ENCODE measurements at regions of chr7 and their contacts with region 1.

Region 1: GRCh38 chr7:100126931-100127865 is at the start of gene MBLAC1:
- DNase-seq: peak; percentile 78 to 94 (median 90)
- H3K4me3 ChIP-seq: peak within 1 kb of the TSS; percentile 64 to 98 (median 93)
- H3K27ac ChIP-seq: peak within 1 kb of the TSS; percentile 55 to 99 (median 95)
- H3K27me3 ChIP-seq: no peaks in the 10 kb centered on the region
- CTCF ChIP-seq: peak in 9 of 56 donors; percentile 1 to 27 (median 9)
- total RNA-seq, gene MBLAC1: 5.6 to 16.5 (median 11.0) TPM

Region 2: DNA sequence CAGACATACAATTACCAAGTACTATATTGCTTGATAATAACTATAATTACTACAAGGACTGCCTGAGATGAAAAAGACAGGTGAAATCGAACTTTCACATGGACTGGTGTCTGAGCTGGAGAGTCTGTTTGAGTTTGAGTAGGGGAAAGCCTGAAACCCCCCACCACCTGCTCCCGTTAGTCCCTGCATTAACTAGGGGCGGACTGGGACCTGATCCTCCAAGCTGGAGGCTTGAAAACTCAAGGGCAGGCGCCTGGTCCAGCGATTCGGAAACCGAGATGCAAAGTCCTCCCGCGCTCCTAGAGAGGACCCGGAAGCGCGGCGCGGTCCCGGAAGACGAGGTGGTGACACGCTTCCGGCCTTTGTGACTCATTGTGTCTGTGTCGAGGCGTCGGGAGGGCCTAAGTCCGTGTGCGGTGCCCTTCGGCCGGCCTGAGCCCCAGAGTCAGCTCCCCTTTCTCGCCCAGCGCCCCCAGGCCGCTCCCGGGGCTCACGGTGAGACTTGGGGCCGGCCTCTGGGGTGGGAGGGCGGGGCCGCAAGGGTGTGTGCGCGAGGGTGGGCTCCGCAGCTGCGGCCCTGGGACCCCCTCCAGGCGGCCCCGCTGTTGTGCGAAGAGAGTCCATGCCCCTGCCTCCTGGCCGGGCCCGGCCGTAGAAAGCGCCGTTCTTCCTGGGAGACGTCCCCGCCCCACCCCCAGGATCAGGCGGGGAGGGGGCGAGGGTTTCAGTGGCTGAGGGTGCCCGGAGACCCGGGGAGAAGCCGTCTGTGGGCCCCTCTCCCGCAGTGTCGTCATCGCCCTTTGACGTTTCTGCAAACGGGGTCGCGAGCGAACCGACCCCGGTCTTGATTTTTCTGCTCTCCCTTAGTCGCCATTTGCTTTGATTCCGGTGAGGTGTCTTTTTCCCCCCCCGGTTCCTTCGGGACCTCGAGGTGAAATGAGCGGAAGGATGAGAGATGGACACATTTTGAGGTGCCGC is 111.7 kb before region 1 on chr7 and contains the start of gene ZKSCAN1:
- intact Hi-C with region 1: no loop called
- DNase-seq: peak; percentile 84 to 93 (median 90)
- H3K4me3 ChIP-seq: peak within 1 kb of the TSS; percentile 65 to 100 (median 99)
- H3K27ac ChIP-seq: peak within 1 kb of the TSS; percentile 92 to 100 (median 99)
- H3K27me3 ChIP-seq: no peaks in the 10 kb centered on the region
- CTCF ChIP-seq: peak in 13 of 56 donors; percentile 7 to 40 (median 22)
- total RNA-seq, gene ZKSCAN1: 96.1 to 181 (median 132) TPM

Region 3: GRCh38 chr7:100148559-100149350 is 21.6 kb after region 1 on chr7 and contains the start of gene LAMTOR4:
- intact Hi-C with region 1: loop called in 1 of 2 experiments (anchors 2 kb)
- DNase-seq: peak; percentile 99 to 100 (median 100)
- H3K4me3 ChIP-seq: peak within 1 kb of the TSS; percentile 60 to 99 (median 85)
- H3K27ac ChIP-seq: peak within 1 kb of the TSS; percentile 62 to 98 (median 89)
- H3K27me3 ChIP-seq: no peaks in the 10 kb centered on the region
- CTCF ChIP-seq: peak in 28 of 56 donors; percentile 1 to 48 (median 21)
- total RNA-seq, gene LAMTOR4: 88.6 to 150 (median 113) TPM

Region 4: DNA sequence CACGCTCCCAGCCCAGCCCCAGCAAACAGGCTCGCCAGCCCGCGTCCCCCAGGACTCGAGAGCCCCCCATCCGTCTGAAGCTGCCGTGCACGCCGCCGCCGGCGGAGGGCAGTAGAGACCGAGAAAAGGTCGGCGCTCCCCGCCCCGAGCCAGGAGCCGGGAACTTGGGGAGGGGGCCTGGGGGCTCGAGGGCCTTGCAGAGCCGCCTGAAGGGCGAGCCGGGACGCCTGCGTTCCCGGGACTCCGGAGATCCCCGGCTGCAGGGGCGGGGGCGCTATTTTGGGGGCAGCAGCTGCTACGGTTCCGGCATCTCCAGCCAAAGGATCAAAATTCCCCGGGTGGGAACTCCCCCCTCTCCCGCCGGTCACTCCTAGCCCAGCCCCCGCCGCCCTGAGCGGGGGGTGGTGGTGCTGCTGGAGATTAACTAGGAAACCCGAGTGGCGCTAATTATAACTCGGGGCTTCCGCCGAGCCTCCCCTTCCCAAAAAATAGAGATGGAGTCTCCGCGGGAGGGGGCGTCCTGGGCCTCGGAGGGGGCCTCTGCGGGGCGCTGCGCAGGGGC is 767.7 kb after region 1 on chr7:
- intact Hi-C with region 1: no loop called
- DNase-seq: peak in 3 of 10 donors; percentile 50 to 71 (median 64)
- H3K4me3 ChIP-seq: peak overlapping the region; percentile 36 to 71 (median 59)
- H3K27ac ChIP-seq: peak overlapping the region in 46 of 59 donors; percentile 20 to 81 (median 67)
- H3K27me3 ChIP-seq: peaks cover 0 to 29% (median 0%) of the 10 kb centered on the region in 45 donors
- CTCF ChIP-seq: peak; percentile 25 to 88 (median 74)

Measured in dorsolateral prefrontal cortex (tissue), 120 donors.